ENCODE measurements at regions of chr19 and their contacts with region 1.

Region 1: GRCh38 chr19:732148-733069 is 18.5 kb upstream of the MISP start:
- DNase-seq: no peak
- ATAC-seq: peak; percentile 28
- H3K4me3 ChIP-seq: no peak overlapping the region
- H3K27ac ChIP-seq: no peak overlapping the region
- H3K4me1 ChIP-seq: peaks cover 5% of the 10 kb centered on the region
- H3K27me3 ChIP-seq: no peaks in the 10 kb centered on the region
- CTCF ChIP-seq: no peak
- EP300 ChIP-seq: no peak
- POLR2A ChIP-seq: no peak
- RAD21 ChIP-seq: no peak

Region 2: GRCh38 chr19:588093-588740 is 144.2 kb before region 1 on chr19:
- CTCF ChIA-PET with region 1: interaction called, 8 read pairs
- POLR2A ChIA-PET with region 1: no interaction called
- RAD21 ChIA-PET with region 1: interaction called, 7 read pairs
- SMC1A ChIA-PET with region 1: interaction called, 3 read pairs
- in situ Hi-C with region 1: loop called (anchors 5 kb)
- intact Hi-C with region 1: loop called (anchors 5 kb)
- DNase-seq: no peak
- ATAC-seq: peak; percentile 58
- H3K4me3 ChIP-seq: no peak overlapping the region
- H3K27ac ChIP-seq: no peak overlapping the region
- H3K4me1 ChIP-seq: no peaks in the 10 kb centered on the region
- H3K27me3 ChIP-seq: peaks cover 4 to 9% of the 10 kb centered on the region in 2 experiments
- CTCF ChIP-seq: peak; percentile 32 to 50 (median 40); a peak in 5 of 6 replicates
- EP300 ChIP-seq: no peak
- POLR2A ChIP-seq: no peak
- RAD21 ChIP-seq: peak; percentile 27; the same call in 1 of the 2 replicates

Region 3: DNA sequence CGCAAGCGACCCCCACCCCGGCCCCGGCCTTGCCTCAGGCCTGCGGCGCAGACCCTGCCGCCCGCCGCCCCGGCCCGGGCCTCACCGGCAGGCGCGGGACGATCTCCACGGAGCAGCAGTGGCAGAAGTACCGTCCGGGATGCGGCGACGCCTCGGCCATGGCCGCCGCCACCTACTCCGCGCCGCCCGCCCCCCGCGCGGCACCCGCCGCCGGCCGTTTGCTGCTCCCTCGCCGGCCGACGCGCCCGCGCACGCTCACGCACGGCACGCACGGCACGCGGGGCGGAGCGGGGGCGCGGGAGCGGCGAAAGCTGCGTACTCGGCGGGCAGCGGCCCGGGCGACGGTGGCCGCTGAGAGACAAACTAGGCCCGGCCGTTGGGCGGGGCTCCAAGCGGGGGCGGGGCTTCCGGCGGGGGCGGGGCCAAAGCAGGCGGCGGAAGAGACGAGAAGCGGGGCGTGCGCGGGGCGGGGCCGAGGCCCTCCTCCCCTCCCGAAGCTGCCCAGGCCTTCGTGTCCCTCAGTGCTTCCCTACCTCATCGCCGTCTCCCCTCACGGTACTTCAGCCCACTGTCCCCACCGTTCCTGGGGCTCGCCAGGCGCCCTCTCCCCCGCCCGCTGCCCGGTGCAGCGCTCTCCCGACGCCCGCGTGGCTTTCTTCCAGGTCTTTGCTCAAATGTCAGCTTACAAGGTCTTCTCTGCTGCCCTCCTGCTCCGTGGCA is 69.3 kb before region 1 on chr19 and contains the start of gene RNF126:
- CTCF ChIA-PET with region 1: interaction called, 18 read pairs
- POLR2A ChIA-PET with region 1: interaction called, 4 read pairs
- RAD21 ChIA-PET with region 1: interaction called, 9 read pairs
- SMC1A ChIA-PET with region 1: interaction called, 12 read pairs
- in situ Hi-C with region 1: loop called (anchors 5 kb)
- intact Hi-C with region 1: loop called (anchors 1 kb)
- DNase-seq: no peak
- ATAC-seq: peak; percentile 64
- H3K4me3 ChIP-seq: peak within 1 kb of the TSS; percentile 98
- H3K27ac ChIP-seq: peak within 1 kb of the TSS; percentile 90
- H3K4me1 ChIP-seq: peaks cover 19% of the 10 kb centered on the region
- H3K27me3 ChIP-seq: no peaks in the 10 kb centered on the region
- CTCF ChIP-seq: no peak
- EP300 ChIP-seq: no peak
- POLR2A ChIP-seq: peak; percentile 81
- RAD21 ChIP-seq: no peak
- polyA plus RNA-seq, gene RNF126: 0.45 to 0.73 TPM

Region 4: GRCh38 chr19:796692-797527 is 64.5 kb after region 1 on chr19 and contains the start of gene PTBP1:
- CTCF ChIA-PET with region 1: no interaction called
- POLR2A ChIA-PET with region 1: no interaction called
- RAD21 ChIA-PET with region 1: no interaction called
- SMC1A ChIA-PET with region 1: no interaction called
- in situ Hi-C with region 1: no loop called
- intact Hi-C with region 1: no loop called
- DNase-seq: peak; percentile 100
- ATAC-seq: peak; percentile 93
- H3K4me3 ChIP-seq: peak within 1 kb of the TSS; percentile 92
- H3K27ac ChIP-seq: peak within 1 kb of the TSS; percentile 90
- H3K4me1 ChIP-seq: peaks cover 7% of the 10 kb centered on the region; the same call in 1 of the 2 replicates
- H3K27me3 ChIP-seq: no peaks in the 10 kb centered on the region
- CTCF ChIP-seq: no peak
- EP300 ChIP-seq: peak in 1 of 2 experiments; percentile 8; a peak in 1 of 4 replicates
- POLR2A ChIP-seq: peak; percentile 87
- RAD21 ChIP-seq: no peak
- polyA plus RNA-seq, gene PTBP1: 13.1 to 31.6 TPM

Measured in GM12878 (cell line).